Heart left ventricle (tissue), 16 donors: ENCODE measurements at regions of chr19 and their contacts with region 1.

Region 1: DNA sequence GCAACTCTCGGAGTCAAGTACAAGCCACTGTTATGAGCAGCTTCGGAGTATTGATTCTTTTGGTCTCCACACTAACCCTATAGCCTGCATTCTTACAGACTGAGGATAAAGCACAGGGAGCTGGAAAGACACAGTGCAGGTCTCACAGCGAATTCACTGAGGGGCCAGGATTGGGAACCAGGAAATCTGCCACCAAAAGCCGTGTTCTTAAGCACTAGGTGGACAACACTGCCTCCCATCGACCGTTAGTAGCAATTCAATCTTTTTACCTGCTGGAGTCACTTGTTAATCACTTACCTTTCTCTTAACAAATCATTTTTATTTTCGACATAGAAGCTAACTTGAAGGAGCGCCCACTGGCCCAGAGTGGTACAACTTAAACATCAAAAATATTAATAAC is 6.3 kb downstream of the PMIS2 start:
- DNase-seq: no peak
- ATAC-seq: no peak
- H3K4me3 ChIP-seq: no peak overlapping the region
- H3K27ac ChIP-seq: no peak overlapping the region
- H3K4me1 ChIP-seq: no peaks in the 10 kb centered on the region
- H3K27me3 ChIP-seq: peaks cover 0 to 26% (median 6%) of the 10 kb centered on the region in 9 donors
- CTCF ChIP-seq: peak in 11 of 12 donors; percentile 15 to 49 (median 36)
- POLR2A ChIP-seq: no peak

Region 2: GRCh38 chr19:35495107-35496064 is 96.8 kb before region 1 on chr19:
- intact Hi-C with region 1: no loop called
- DNase-seq: peak; percentile 61 to 88 (median 71)
- ATAC-seq: peak; percentile 81 to 94 (median 90)
- H3K4me3 ChIP-seq: peak overlapping the region in 1 of 12 donors; percentile 26
- H3K27ac ChIP-seq: no peak overlapping the region
- H3K4me1 ChIP-seq: peaks cover 0 to 7% (median 2%) of the 10 kb centered on the region in 12 donors
- H3K27me3 ChIP-seq: peaks cover 0 to 3% (median 0%) of the 10 kb centered on the region in 9 donors
- CTCF ChIP-seq: peak; percentile 96 to 99 (median 98)
- POLR2A ChIP-seq: no peak

Region 3: DNA sequence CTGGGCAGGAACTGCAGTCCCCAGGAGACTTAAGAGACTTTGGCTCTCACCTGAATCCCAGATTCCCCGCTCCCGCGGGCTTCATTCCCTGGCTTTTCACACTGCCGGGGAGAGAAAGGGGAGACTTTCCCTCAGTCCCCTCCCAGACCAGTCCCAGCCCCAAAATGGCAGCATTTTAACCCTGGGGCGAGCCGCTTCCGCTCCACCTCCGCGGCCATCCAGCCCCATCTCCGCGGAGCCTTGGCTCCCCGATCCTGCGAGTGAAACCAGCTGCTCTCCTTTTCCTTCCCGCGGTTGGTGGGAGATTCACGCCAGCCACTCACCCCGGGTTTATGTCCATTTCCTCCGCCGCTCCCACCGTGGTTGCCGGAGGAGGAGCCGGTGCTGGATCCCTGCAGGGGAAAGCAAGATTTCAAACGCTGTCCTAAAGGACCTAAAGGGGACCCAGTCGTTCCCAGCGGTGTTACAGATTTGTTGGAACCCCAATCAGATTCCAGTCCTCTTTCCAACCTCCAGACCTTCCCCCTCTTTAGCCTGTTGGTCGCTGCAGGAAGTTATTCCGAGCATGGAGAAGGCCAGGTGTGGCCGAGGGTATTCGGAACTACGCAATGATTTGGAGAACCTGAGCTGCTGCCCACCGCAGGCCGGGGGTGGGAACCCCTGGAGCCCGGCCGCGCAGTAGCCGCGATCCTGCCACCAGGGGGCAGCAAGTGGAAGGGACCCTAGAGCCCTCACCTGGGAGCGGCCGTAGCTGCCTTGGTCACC is 82.2 kb before region 1 on chr19:
- intact Hi-C with region 1: loop called in 1 of 10 experiments (anchors 5 kb)
- DNase-seq: peak; percentile 63 to 86 (median 74)
- ATAC-seq: peak; percentile 80 to 91 (median 84)
- H3K4me3 ChIP-seq: peak overlapping the region in 11 of 12 donors; percentile 21 to 57 (median 46)
- H3K27ac ChIP-seq: no peak overlapping the region
- H3K4me1 ChIP-seq: peaks cover 0 to 21% (median 9%) of the 10 kb centered on the region in 12 donors
- H3K27me3 ChIP-seq: peaks cover 0 to 44% (median 27%) of the 10 kb centered on the region in 9 donors
- CTCF ChIP-seq: peak; percentile 84 to 97 (median 91)
- POLR2A ChIP-seq: no peak

Region 4: GRCh38 chr19:35959040-35959967 is 367.1 kb after region 1 on chr19:
- intact Hi-C with region 1: no loop called
- DNase-seq: peak; percentile 33 to 77 (median 39)
- ATAC-seq: peak in 3 of 4 donors; percentile 60 to 83 (median 69)
- H3K4me3 ChIP-seq: peak overlapping the region in 5 of 12 donors; percentile 4 to 43 (median 28)
- H3K27ac ChIP-seq: no peak overlapping the region
- H3K4me1 ChIP-seq: peaks cover 0 to 18% (median 1%) of the 10 kb centered on the region in 12 donors
- H3K27me3 ChIP-seq: peaks cover 17 to 65% (median 31%) of the 10 kb centered on the region in 9 donors
- CTCF ChIP-seq: peak in 9 of 12 donors; percentile 7 to 44 (median 21)
- POLR2A ChIP-seq: no peak